ENCODE measurements at regions of chr10 and their contacts with region 1.

Region 1: DNA sequence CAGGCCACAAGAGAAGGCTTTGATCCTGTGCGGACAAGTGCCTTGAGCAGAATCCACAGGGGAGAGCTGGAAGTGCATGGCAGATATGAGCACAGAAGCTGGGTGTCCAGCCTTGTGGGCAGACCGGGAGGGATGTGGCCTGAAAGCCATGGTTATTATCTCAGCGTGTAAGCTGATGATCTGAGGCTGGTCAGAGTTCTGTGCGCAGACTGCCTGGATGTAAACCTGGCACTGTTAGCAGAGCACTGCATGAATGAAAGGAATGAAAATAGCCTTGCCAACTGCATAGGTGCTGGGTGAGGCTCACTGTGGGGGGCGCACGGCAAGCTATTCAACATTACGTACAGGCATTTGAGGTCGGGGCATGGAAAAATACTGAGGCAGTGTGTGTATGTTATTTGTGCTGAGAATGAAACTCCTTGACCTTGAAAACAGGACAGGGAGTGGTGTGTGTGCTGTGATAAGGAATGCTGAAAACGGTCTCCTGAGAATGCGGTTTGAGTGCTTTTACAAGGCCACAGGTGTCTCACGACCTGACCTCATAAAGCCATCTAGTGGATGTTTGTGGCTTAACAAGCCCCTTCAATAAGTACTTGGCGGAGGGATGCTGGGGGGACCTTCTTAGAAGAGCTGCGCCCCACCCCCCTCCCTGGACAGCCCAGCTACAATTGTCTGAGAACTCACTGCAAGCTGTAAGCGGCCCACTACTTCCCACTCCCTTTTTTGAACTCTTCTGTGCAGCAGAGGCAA is 18.7 kb downstream of the AKR1C1 start:
- DNase-seq: peak; percentile 10

Region 2: DNA sequence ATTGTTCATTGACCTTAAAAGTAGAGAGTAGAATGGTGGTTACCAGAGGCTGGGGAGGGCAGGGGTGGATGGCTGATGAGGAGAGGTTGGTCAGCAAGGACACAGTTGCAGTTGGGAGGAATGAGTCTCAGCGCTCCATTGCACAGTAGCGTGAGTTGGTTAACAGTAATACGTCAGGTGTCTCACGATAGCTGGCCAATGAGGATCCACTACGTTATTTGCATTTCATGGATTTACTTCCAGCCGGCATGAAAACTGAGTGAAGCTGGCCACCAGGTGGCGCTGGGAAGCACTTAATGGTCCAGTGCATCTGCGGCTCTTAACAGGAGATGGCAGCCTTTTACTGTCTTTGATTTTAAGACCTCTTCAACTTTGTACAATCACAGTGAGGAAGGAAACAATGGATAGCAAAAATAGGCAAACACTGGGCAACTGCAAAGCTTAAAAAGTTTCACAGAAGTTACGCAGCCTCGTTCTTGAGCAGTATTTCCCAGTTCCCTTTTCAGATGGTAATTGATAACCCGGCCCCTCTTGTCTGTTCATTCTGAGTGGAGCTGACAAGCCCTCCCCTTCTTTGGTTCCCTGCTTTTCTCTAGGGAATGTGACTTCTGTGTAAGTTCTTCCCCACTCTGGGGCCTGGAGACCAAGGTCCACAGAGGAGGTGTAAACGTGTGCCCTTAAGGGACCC is 132.2 kb before region 1 on chr10:
- CTCF ChIA-PET with region 1: interaction called, 19 read pairs
- POLR2A ChIA-PET with region 1: no interaction called
- DNase-seq: peak; percentile 72

Region 3: GRCh38 chr10:4953405-4953804 is 28.5 kb before region 1 on chr10:
- CTCF ChIA-PET with region 1: no interaction called
- POLR2A ChIA-PET with region 1: no interaction called
- DNase-seq: no peak

Region 4: DNA sequence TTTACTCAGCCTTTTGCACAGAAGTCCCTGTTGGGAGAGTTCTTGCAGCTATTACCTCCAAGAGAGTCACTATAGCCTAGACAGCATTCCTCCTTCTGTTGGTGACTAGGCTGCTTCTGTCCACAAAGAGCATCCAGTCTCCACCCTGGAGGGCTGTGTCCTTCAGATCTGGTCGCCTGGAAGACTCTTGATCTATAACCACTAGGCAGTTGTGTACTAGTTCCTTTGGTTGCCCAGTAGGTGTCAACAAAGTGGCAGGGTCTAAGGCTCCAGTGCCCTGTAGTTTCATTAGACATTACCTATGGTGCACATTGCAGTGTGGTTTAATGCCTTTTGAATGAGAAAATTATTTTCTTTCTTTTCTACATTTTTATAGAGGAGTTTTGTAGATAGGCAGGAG is 33.0 kb after region 1 on chr10:
- CTCF ChIA-PET with region 1: no interaction called
- POLR2A ChIA-PET with region 1: no interaction called
- DNase-seq: no peak